Activated CD4-positive, alpha-beta T cell treated with anti-CD3 and anti-CD28 coated beads, Interleukin-2, amount 10 ng/mL, durations not matched to agents 7 days and 5 days (primary cell): ENCODE measurements at regions of chr4 and their contacts with region 1.

Region 1: GRCh38 chr4:83110223-83110945 is 4.1 kb downstream of the PLAC8 start:
- DNase-seq: peak; percentile 93
- H3K4me3 Mint-ChIP-seq: peak overlapping the region; percentile 92
- H3K27ac Mint-ChIP-seq: peak overlapping the region; percentile 92
- H3K4me1 Mint-ChIP-seq: peaks cover 57% of the 10 kb centered on the region
- H3K27me3 Mint-ChIP-seq: no peaks in the 10 kb centered on the region

Region 2: DNA sequence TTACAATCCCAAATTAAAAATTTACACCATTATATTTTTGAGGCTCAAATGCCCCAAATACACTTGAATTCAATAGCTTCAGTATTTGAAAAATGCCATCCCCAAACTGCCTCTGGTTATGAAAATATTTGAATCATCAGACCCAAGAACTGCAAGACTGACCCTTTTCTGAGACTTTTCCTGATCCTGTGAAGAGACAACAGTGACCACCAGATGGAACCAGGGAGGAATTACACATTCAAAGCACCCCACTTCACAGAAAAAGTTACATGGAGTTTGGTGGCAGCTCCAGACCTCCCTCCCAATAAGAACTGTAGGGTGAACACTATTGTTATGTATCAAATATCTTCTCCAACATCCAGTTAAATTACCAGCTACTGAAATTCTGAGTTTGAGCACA is 267.8 kb before region 1 on chr4:
- CTCF ChIA-PET with region 1: no interaction called
- POLR2A ChIA-PET with region 1: no interaction called
- DNase-seq: no peak
- H3K4me3 Mint-ChIP-seq: no peak overlapping the region
- H3K27ac Mint-ChIP-seq: no peak overlapping the region
- H3K4me1 Mint-ChIP-seq: peaks cover 1% of the 10 kb centered on the region
- H3K27me3 Mint-ChIP-seq: no peaks in the 10 kb centered on the region

Region 3: DNA sequence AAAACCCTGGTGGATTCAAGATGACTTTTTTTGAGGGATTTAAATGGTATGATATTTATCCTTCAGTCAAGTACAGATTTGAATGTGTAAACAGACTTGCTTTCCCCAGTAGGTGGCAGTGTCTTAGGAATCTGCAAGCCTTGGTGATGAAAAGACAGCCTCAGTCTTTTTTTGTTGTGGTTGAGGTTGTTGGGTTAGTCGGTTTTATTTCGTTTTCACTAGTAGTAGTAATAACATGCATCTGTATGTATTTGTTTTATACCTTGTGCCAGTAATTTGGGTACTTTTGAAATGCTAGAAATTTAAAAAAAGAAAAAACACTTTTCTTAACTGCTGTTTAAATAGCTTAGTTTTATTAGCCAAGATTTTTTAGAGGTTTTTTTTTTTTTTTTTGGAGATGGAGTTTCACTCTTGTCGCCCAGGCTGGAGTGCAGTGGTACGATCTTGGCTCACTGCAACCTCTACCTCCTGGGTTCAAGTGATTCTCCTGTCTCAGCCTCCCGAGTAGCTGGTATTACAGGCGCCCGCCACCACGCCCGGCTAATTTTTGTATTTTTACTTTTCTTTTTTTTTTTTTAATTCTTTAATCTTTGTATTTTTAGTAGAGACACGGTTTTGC is 36.2 kb before region 1 on chr4:
- CTCF ChIA-PET with region 1: interaction called, 10 read pairs
- POLR2A ChIA-PET with region 1: no interaction called
- DNase-seq: peak; percentile 89
- H3K4me3 Mint-ChIP-seq: peak overlapping the region; percentile 46
- H3K27ac Mint-ChIP-seq: peak overlapping the region; percentile 81
- H3K4me1 Mint-ChIP-seq: peaks cover 23% of the 10 kb centered on the region
- H3K27me3 Mint-ChIP-seq: no peaks in the 10 kb centered on the region

Region 4: DNA sequence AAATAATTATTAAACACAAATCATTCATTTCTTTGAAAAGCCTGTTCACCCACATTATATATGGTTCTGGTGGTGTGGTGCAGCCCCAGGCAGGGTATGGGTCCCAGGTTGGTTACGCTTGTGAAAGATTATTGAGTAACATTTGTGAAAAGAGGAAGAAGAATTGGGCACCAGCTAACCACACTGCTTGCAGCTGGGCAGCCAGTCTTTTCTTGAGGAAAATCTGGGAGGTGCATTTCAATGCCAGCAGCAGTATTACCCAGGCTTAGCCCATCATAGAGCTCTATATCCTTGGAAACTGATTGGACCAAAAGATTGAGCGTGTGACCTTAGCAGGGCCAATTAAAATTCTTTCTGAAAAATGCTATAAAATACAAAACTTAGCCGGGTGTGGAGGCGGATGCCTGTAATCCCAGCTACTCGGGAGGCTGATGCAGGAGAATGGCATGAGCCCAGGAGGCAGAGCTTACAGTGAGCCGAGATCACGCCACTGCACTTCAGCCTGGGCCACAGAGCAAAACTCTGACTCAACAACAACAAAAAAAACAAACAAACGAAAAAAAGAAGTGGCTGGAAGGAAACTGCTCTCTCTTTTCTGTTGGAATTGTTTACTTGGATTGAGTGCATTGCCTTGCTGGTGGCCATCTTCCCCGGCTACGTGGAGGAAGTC is 13.9 kb after region 1 on chr4:
- CTCF ChIA-PET with region 1: interaction called, 21 read pairs
- POLR2A ChIA-PET with region 1: no interaction called
- DNase-seq: no peak
- H3K4me3 Mint-ChIP-seq: no peak overlapping the region
- H3K27ac Mint-ChIP-seq: peak overlapping the region; percentile 43
- H3K4me1 Mint-ChIP-seq: peaks cover 29% of the 10 kb centered on the region
- H3K27me3 Mint-ChIP-seq: peaks cover 9% of the 10 kb centered on the region

Region 5: GRCh38 chr4:83252782-83253405 is 142.5 kb after region 1 on chr4:
- CTCF ChIA-PET with region 1: interaction called, 25 read pairs
- POLR2A ChIA-PET with region 1: no interaction called
- DNase-seq: peak; percentile 85
- H3K4me3 Mint-ChIP-seq: no peak overlapping the region
- H3K27ac Mint-ChIP-seq: peak overlapping the region; percentile 33
- H3K4me1 Mint-ChIP-seq: peaks cover 49% of the 10 kb centered on the region
- H3K27me3 Mint-ChIP-seq: no peaks in the 10 kb centered on the region